AG04450 (cell line): ENCODE measurements at regions of chr19 and their contacts with region 1.

Region 1: GRCh38 chr19:45125926-45126493 is 33.0 kb downstream of the PPP1R37 start:
- DNase-seq: peak; percentile 8
- H3K4me3 ChIP-seq: no peak overlapping the region
- H3K27ac ChIP-seq: no peak overlapping the region
- H3K27me3 ChIP-seq: no peaks in the 10 kb centered on the region
- CTCF ChIP-seq: peak; percentile 77

Region 2: GRCh38 chr19:45047188-45047797 is 78.7 kb before region 1 on chr19:
- CTCF ChIA-PET with region 1: no interaction called
- POLR2A ChIA-PET with region 1: no interaction called
- DNase-seq: no peak
- H3K4me3 ChIP-seq: no peak overlapping the region
- H3K27ac ChIP-seq: no peak overlapping the region
- H3K27me3 ChIP-seq: no peaks in the 10 kb centered on the region
- CTCF ChIP-seq: no peak

Region 3: DNA sequence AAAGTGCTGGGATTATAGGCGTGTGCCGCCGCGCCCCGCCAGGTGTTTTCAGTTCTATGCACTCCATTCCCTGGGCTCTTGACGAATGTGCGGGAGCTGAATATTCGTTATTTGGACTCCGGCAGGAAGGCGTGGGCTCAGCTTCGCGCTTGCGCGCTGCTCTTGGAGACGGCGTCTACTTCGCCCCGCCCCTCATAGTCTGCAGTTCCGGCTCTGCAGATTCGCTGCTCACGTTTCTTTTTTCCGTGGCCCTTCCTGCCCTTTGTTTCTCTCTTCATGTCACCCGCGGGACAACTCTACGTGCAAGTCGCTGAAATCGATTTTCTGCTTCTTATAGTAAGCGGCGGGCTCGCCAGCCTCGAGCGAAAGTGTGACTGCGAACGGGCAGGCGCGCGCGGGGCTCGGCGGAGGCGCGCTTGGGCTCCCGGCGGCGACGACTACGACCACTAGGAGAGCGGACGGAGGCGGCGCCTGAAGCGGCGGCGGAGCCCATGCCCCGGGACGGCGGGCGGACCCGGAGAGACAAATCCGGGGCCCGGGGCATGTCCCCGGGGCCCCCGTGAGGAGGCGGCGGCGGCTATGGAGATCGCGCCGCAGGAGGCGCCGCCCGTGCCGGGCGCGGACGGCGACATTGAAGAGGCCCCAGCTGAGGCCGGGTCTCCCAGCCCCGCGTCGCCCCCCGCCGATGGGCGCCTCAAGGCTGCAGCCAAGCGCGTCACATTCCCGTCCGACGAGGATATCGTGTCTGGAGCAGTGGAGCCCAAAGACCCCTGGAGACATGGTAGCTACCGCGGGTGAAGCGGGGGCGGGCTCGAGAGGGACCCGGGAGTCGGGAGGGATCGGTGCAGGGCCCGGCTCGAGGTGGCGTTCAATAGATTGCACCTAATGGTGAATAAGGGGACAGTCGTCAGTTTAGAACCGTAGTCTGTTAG is 33.0 kb before region 1 on chr19 and contains the start of gene PPP1R37:
- CTCF ChIA-PET with region 1: interaction called, 13 read pairs
- POLR2A ChIA-PET with region 1: interaction called, 3 read pairs
- DNase-seq: peak; percentile 95
- H3K4me3 ChIP-seq: peak within 1 kb of the TSS; percentile 92
- H3K27ac ChIP-seq: peak within 1 kb of the TSS; percentile 94
- H3K27me3 ChIP-seq: no peaks in the 10 kb centered on the region
- CTCF ChIP-seq: peak; percentile 19; the same call in 1 of the 2 replicates
- polyA plus RNA-seq, gene PPP1R37: 8.6 and 11.2 TPM in 2 replicates